ENCODE measurements at regions of chr20 and their contacts with region 1.

Region 1: DNA sequence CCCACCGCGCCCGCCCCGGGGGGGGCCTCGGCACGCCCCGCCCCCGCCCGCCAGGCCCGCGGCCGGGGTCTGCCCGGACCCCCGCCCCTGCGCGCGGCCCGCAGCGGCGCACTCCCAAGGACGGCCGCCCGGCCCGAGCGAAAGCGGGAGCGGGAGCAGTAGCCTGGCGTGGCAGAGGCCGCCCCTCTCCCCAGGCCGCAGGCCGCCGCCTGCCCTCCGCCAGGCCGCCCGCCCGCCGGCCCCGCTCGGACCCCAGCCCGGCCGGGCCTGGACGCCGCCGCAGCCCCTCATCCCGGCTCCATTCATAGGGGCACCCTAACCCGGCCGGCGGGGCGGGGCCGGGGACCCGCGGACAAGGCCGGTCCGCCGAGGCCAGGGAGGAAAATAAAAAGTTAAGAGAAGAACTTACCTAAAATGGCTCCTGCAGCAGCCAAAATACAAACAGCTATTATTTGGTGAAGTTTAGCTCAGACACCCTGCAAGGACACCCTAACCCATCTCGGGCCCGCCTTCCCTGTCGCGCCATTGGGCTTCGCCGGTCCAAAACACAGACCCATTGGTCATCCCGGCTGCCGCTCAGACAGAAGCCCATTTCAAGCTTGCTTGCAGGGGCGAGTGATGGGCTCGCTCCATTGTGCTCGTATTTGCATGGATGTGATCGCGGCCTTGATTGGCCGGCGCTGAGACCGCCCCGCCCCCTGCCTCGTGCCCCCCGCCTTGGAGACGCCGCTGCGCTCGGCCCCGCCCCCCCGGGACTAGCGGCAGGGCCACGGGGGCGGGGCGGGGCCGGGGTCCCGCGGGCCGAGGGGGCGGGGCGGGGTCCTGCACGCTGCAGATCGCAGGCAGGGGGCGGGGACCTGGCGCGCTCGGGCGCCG is at the start of gene CHD6:
- DNase-seq: peak; percentile 100
- ATAC-seq: peak; percentile 99
- total RNA-seq, gene CHD6: 35.6 to 36.5 TPM

Region 2: GRCh38 chr20:41386502-41387427 is 231.4 kb before region 1 on chr20:
- intact Hi-C with region 1: no loop called
- DNase-seq: no peak
- ATAC-seq: peak; percentile 80 to 82

Region 3: GRCh38 chr20:41509316-41510200 is 108.6 kb before region 1 on chr20:
- intact Hi-C with region 1: loop called in 1 of 2 experiments (anchors 5 kb)
- DNase-seq: peak; percentile 62
- ATAC-seq: peak; percentile 73 to 76

Region 4: DNA sequence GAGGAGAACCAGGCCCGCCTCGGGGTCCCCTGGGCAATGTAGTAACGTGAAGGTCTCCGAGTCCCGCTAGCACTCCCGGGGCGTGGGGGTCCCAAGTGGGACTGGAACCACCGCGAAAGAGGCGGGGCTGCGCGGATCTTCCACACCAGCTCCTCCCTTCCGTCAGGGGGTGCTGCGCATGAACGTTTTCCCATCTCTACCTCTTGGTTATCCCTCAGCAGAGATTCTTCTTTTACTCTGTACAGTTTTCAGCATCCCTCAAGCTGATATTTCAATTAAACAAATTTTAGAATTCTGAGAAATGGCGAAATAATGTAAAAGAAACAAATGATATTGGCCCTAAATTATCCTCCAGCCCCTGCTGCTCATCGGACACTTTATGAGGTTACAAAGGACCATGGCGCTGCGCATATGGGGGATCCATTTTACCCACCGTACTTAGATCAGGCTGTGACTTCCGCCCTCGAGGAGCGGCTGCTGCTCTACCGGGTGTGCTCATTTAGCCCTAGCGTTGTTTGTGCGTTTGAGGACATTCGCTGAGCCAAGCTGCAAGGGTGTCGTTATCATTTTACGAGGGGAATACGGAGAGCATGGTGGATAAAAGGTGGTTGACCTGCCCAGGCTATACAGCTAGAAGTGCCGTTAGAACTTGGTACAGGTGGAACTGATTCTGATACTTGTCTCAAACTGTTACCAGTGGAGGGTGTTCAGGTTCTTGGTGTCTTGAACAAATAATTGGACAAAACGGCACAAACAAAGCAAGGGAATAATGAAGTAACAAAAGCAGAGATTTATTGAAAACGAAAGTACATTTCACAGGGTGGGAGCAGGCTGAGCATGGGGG is 75.2 kb after region 1 on chr20:
- intact Hi-C with region 1: loop called in 1 of 2 experiments (anchors 10 kb)
- DNase-seq: peak; percentile 85
- ATAC-seq: peak; percentile 95 to 96

Region 5: GRCh38 chr20:41722236-41722635 is 104.1 kb after region 1 on chr20:
- intact Hi-C with region 1: no loop called
- DNase-seq: no peak
- ATAC-seq: no peak

Measured in left cardiac atrium (tissue), 4 donors.